ENCODE measurements at regions of chr10 and their contacts with region 1.

Region 1: GRCh38 chr10:76984559-76985443 is 652.8 kb downstream of the KCNMA1 start:
- DNase-seq: peak; percentile 66
- H3K4me3 ChIP-seq: no peak overlapping the region
- H3K27ac ChIP-seq: no peak overlapping the region
- H3K4me1 ChIP-seq: no peaks in the 10 kb centered on the region
- H3K27me3 ChIP-seq: no peaks in the 10 kb centered on the region
- CTCF ChIP-seq: peak; percentile 73 to 95 (median 78)
- POLR2A ChIP-seq: no peak

Region 2: GRCh38 chr10:76558586-76558985 is 426.2 kb before region 1 on chr10:
- intact Hi-C with region 1: loop called (anchors 10 kb)
- DNase-seq: no peak
- H3K4me3 ChIP-seq: no peak overlapping the region
- H3K27ac ChIP-seq: peak overlapping the region in 1 of 2 donors; percentile 22
- H3K4me1 ChIP-seq: no peaks in the 10 kb centered on the region
- H3K27me3 ChIP-seq: no peaks in the 10 kb centered on the region
- CTCF ChIP-seq: no peak
- POLR2A ChIP-seq: no peak

Region 3: DNA sequence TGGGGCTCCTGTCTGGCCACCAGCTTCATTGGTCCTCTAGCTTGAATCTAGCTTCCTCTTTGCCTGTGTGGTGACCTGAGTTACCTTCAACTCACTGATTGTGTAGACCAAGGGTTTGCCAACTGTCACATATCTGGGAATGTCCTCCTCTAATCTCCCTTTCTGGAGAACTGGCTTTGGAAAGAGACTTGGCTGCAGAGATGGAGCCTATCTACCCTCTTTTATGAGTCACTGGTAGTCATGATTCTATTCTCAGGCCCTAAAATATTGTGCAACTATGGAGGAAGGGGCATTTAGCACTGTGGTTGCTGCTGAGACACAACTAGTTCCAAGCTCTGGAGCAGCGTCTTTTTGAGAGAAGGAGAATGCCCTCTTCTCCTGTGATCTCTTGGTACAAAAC is 38.5 kb before region 1 on chr10:
- intact Hi-C with region 1: no loop called
- DNase-seq: no peak
- H3K4me3 ChIP-seq: no peak overlapping the region
- H3K27ac ChIP-seq: no peak overlapping the region
- H3K4me1 ChIP-seq: no peaks in the 10 kb centered on the region
- H3K27me3 ChIP-seq: no peaks in the 10 kb centered on the region
- CTCF ChIP-seq: no peak
- POLR2A ChIP-seq: no peak